ENCODE measurements at regions of chr15 and their contacts with region 1.

Region 1: DNA sequence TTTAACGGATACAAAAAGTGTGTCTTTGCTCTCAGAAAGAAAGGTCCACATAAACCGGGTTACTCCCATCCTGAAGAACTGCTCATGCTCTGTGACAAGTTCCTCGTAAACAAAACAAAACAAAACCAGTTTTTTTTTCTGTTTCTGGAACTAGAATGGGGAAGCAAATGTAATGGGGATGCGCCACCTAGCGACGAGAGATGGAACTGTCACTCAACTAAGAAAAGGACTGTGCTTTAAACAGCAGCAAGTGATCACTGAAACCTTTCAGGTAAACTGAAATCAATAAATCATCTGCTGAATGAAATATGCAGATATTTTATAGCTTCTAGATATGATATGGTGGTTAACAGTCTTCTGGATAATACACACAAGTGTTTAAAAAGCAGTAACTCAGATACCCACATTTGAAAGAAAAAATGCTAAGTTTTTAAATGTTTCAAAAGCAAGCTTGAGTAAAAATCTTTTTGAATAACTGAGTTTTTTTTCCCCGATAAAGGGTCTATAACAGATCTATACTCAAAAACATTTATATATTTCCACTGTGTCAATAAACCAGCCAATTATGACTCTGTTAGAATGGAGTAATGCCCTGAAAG is 10.9 kb downstream of the TM2D3 start:
- DNase-seq: peak; percentile 88
- ATAC-seq: peak; percentile 60
- H3K4me3 Mint-ChIP-seq: no peak overlapping the region
- H3K27ac Mint-ChIP-seq: peak overlapping the region; percentile 70
- H3K4me1 Mint-ChIP-seq: peaks cover 27% of the 10 kb centered on the region
- H3K27me3 Mint-ChIP-seq: no peaks in the 10 kb centered on the region
- CTCF ChIP-seq: peak; percentile 94

Region 2: GRCh38 chr15:101188637-101189408 is 452.4 kb before region 1 on chr15:
- CTCF ChIA-PET with region 1: no interaction called
- POLR2A ChIA-PET with region 1: no interaction called
- intact Hi-C with region 1: no loop called
- DNase-seq: no peak
- ATAC-seq: peak; percentile 70
- H3K4me3 Mint-ChIP-seq: peak overlapping the region; percentile 18
- H3K27ac Mint-ChIP-seq: peak overlapping the region; percentile 84
- H3K4me1 Mint-ChIP-seq: peaks cover 90% of the 10 kb centered on the region
- H3K27me3 Mint-ChIP-seq: no peaks in the 10 kb centered on the region
- CTCF ChIP-seq: no peak

Region 3: GRCh38 chr15:101277038-101277882 is 364.0 kb before region 1 on chr15 and contains the start of gene SELENOS:
- CTCF ChIA-PET with region 1: interaction called, 5 read pairs
- POLR2A ChIA-PET with region 1: no interaction called
- intact Hi-C with region 1: loop called (anchors 5 kb)
- DNase-seq: peak; percentile 88
- ATAC-seq: peak; percentile 93
- H3K4me3 Mint-ChIP-seq: peak within 1 kb of the TSS; percentile 97
- H3K27ac Mint-ChIP-seq: peak within 1 kb of the TSS; percentile 86
- H3K4me1 Mint-ChIP-seq: peaks cover 25% of the 10 kb centered on the region
- H3K27me3 Mint-ChIP-seq: no peaks in the 10 kb centered on the region
- CTCF ChIP-seq: peak; percentile 14
- total RNA-seq, gene SELENOS: 18.8 to 21.6 TPM

Region 4: GRCh38 chr15:101294731-101295606 is 346.3 kb before region 1 on chr15 and contains the start of gene SNRPA1:
- CTCF ChIA-PET with region 1: interaction called, 44 read pairs
- POLR2A ChIA-PET with region 1: interaction called, 4 read pairs
- intact Hi-C with region 1: no loop called
- DNase-seq: peak; percentile 98
- ATAC-seq: peak; percentile 84
- H3K4me3 Mint-ChIP-seq: peak within 1 kb of the TSS; percentile 80
- H3K27ac Mint-ChIP-seq: peak within 1 kb of the TSS; percentile 95
- H3K4me1 Mint-ChIP-seq: peaks cover 42% of the 10 kb centered on the region
- H3K27me3 Mint-ChIP-seq: no peaks in the 10 kb centered on the region
- CTCF ChIP-seq: no peak
- total RNA-seq, gene SNRPA1: 243 to 249 TPM

Region 5: GRCh38 chr15:101320501-101321052 is 320.7 kb before region 1 on chr15:
- CTCF ChIA-PET with region 1: interaction called, 24 read pairs
- POLR2A ChIA-PET with region 1: no interaction called
- intact Hi-C with region 1: no loop called
- DNase-seq: peak; percentile 87
- ATAC-seq: peak; percentile 99
- H3K4me3 Mint-ChIP-seq: peak overlapping the region; percentile 81
- H3K27ac Mint-ChIP-seq: peak overlapping the region; percentile 91
- H3K4me1 Mint-ChIP-seq: peaks cover 14% of the 10 kb centered on the region
- H3K27me3 Mint-ChIP-seq: no peaks in the 10 kb centered on the region
- CTCF ChIP-seq: peak; percentile 82

Region 6: GRCh38 chr15:101615986-101616848 is 25.0 kb before region 1 on chr15:
- CTCF ChIA-PET with region 1: interaction called, 10 read pairs
- POLR2A ChIA-PET with region 1: no interaction called
- intact Hi-C with region 1: no loop called
- DNase-seq: peak; percentile 42
- ATAC-seq: peak; percentile 91
- H3K4me3 Mint-ChIP-seq: no peak overlapping the region
- H3K27ac Mint-ChIP-seq: peak overlapping the region; percentile 25
- H3K4me1 Mint-ChIP-seq: peaks cover 12% of the 10 kb centered on the region
- H3K27me3 Mint-ChIP-seq: no peaks in the 10 kb centered on the region
- CTCF ChIP-seq: no peak

Measured in activated CD8-positive, alpha-beta T cell treated with anti-CD3 and anti-CD28 coated beads for 36 hours (primary cell).